CD4-positive, alpha-beta memory T cell (primary cell): ENCODE measurements at regions of chr19 and their contacts with region 1.

Region 1: DNA sequence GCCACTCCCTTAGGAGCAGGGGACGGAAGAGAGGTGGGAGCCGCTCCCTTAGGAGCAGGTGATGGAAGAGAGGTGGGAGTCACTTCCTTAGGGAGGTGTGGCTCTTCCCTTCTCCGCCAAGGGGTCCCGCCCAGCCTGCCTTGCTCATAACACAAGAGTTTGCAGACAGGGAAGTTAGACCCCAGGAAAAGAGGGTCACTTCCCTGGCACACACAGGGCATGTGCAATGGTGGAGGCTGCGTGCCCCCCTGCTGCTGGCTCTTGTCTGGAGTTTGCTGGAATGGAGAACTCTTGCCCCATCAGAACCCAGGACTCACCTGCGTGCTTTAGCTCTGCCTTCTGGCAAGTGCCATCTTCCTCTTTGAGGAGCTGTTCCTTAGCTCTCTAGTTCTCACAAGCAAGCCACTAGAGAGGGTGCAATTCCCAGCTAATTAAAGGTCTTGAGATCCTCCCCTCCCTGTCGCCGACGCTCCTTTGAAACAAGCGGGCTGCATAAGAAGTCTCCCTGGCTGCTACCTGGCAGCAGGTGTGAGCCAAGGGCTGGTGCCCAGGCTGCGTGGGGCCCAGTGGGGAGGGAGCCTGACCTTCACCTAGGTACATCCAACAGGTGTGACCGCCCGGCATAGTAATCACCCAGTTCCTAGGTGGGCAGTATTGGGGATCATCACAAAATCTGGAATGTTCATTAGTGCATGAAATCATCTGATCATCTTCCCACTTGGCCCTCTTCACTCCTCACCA is 281.6 kb downstream of the ZNF536 start:
- DNase-seq: no peak
- H3K4me3 ChIP-seq: no peak overlapping the region
- H3K4me3 Mint-ChIP-seq: no peak overlapping the region
- H3K27ac ChIP-seq: no peak overlapping the region
- H3K27ac Mint-ChIP-seq: no peak overlapping the region
- H3K4me1 ChIP-seq: no peaks in the 10 kb centered on the region
- H3K4me1 Mint-ChIP-seq: no peaks in the 10 kb centered on the region
- H3K27me3 ChIP-seq: no peaks in the 10 kb centered on the region
- H3K27me3 Mint-ChIP-seq: peaks cover 10 to 24% of the 10 kb centered on the region in 2 donors

Region 2: GRCh38 chr19:30564551-30565011 is 89.2 kb before region 1 on chr19:
- CTCF ChIA-PET with region 1: no interaction called
- POLR2A ChIA-PET with region 1: no interaction called
- intact Hi-C with region 1: no loop called
- DNase-seq: no peak
- H3K4me3 ChIP-seq: no peak overlapping the region
- H3K4me3 Mint-ChIP-seq: no peak overlapping the region
- H3K27ac ChIP-seq: no peak overlapping the region
- H3K27ac Mint-ChIP-seq: no peak overlapping the region
- H3K4me1 ChIP-seq: no peaks in the 10 kb centered on the region
- H3K4me1 Mint-ChIP-seq: no peaks in the 10 kb centered on the region
- H3K27me3 ChIP-seq: no peaks in the 10 kb centered on the region
- H3K27me3 Mint-ChIP-seq: peaks cover 0 to 7% of the 10 kb centered on the region in 2 donors

Region 3: GRCh38 chr19:30669329-30670010 is 15.7 kb after region 1 on chr19:
- CTCF ChIA-PET with region 1: interaction called, 21 read pairs
- POLR2A ChIA-PET with region 1: no interaction called
- intact Hi-C with region 1: no loop called
- DNase-seq: peak in 4 of 5 donors; percentile 5 to 23 (median 12)
- H3K4me3 ChIP-seq: no peak overlapping the region
- H3K4me3 Mint-ChIP-seq: no peak overlapping the region
- H3K27ac ChIP-seq: no peak overlapping the region
- H3K27ac Mint-ChIP-seq: no peak overlapping the region
- H3K4me1 ChIP-seq: no peaks in the 10 kb centered on the region
- H3K4me1 Mint-ChIP-seq: no peaks in the 10 kb centered on the region
- H3K27me3 ChIP-seq: peaks cover 5% of the 10 kb centered on the region
- H3K27me3 Mint-ChIP-seq: peaks cover 10 to 31% of the 10 kb centered on the region in 2 donors

Region 4: DNA sequence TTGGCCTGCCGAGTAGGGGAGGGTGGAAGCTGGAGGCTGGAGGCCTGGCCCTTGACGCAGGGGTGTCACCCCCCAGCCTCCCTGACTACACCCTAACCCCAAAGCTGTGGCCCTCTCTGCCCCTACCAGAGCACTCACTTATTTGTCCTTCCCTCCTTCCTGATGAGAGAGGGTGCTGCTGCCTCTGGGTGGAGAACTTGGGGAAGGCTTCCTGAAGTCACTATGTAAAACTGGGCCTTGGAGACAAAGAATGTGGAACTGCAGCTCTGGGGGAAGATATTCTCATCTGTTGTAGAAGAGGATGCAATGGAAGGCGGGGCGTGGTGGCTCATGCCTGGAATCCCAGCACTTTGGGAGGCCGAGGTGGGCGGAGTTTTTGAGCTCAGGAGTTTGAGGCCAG is 203.6 kb after region 1 on chr19:
- CTCF ChIA-PET with region 1: no interaction called
- POLR2A ChIA-PET with region 1: no interaction called
- intact Hi-C with region 1: no loop called
- DNase-seq: no peak
- H3K4me3 ChIP-seq: no peak overlapping the region
- H3K4me3 Mint-ChIP-seq: no peak overlapping the region
- H3K27ac ChIP-seq: no peak overlapping the region
- H3K27ac Mint-ChIP-seq: no peak overlapping the region
- H3K4me1 ChIP-seq: no peaks in the 10 kb centered on the region
- H3K4me1 Mint-ChIP-seq: no peaks in the 10 kb centered on the region
- H3K27me3 ChIP-seq: peaks cover 4% of the 10 kb centered on the region
- H3K27me3 Mint-ChIP-seq: peaks cover 2 to 8% of the 10 kb centered on the region in 2 donors